Activated CD4-positive, alpha-beta T cell treated with anti-CD3 and anti-CD28 coated beads, Interleukin-2, amount 10 ng/mL, durations not matched to agents 24 days and 14 days (primary cell): ENCODE measurements at regions of chr12 and their contacts with region 1.

Region 1: DNA sequence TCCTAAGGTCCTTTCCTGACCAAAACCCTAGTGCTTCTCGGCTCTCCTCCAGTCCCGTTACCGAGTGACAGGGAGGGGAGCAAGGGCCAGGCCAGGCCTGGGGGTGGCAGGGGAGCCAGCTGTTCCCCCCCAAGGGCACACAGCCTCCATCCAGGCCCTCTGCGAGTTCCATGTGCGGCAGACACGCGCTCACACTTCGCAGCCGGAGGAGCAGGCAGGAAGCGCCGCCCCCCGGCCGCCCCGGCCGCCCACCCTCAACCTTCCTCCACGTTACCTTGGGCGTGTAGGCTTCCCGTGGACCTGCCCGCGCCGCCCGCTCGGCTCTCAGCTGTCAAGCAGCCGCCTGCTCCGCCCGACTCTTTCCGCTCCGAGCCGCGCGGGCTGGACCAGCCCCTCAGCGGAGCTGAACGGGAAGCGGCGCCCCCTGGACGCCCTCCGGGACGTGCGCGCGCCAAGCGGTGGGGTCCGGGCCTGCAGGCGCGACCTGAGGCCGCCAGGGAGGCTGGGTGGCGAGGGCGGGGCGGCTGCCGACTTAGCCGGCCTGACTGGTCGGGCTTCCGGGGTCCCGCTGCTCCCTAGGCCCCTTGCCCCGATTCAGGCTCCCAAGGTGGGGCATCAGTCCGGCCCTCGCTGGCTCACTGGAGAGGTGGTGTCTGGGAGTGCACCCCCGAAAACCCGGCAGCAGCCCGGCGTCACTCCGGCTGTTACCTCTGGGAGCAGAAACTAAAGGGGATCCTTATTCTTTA is at the start of gene CRACR2A:
- DNase-seq: peak; percentile 96
- H3K4me3 Mint-ChIP-seq: peak within 1 kb of the TSS; percentile 90
- H3K27ac Mint-ChIP-seq: peak within 1 kb of the TSS; percentile 98
- H3K4me1 Mint-ChIP-seq: peaks cover 47% of the 10 kb centered on the region
- H3K27me3 Mint-ChIP-seq: no peaks in the 10 kb centered on the region
- total RNA-seq, gene CRACR2A: 26.6 and 27.0 TPM in 2 replicates

Region 2: DNA sequence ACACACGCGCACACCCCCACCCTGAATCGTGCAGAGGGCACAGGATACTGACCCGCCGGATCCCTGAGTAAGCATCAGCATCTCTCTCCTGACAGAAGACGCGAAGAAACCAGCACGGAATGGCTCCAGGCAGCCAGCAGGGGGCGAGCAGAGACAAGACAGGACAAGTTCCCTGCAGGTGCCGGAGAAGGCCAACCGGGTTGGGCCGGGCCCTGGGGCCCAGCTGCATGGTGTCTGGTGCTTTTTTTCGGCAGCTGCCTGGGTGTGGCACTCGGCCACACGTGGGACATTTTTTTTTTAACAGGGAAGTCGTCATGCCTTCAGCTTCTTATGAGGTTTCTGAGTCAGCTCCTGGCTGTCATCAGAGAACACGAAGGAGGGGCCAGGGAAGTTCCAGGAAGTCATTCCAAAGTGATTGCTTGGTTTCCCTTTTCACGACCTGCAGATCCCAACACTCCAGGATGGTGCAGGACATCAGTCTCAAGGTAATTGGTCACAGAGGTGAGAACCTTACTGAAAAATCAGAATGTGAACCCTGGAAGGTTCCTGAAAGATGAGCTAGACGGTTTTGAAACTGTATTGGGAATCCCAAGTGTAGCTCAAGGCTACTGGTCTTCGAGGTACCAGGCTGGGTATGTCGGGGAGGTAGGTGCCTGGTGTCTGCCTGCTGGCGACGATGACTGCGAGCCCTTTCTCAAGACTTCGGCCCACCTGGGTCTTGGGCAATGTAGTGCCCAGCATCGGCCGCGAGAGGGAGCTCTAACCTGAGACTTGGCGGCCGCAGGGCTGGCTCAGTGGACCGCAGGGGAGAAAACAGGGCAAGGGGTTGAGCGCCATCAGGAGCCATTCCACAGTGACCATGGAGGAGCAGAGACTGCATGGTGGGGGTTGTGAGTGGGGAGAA is 452.7 kb before region 1 on chr12:
- intact Hi-C with region 1: loop called (anchors 1 kb)
- DNase-seq: peak; percentile 94
- H3K4me3 Mint-ChIP-seq: peak overlapping the region; percentile 64
- H3K27ac Mint-ChIP-seq: peak overlapping the region; percentile 78
- H3K4me1 Mint-ChIP-seq: peaks cover 11% of the 10 kb centered on the region
- H3K27me3 Mint-ChIP-seq: peaks cover 3% of the 10 kb centered on the region

Region 3: GRCh38 chr12:3489057-3489456 is 263.9 kb before region 1 on chr12:
- intact Hi-C with region 1: no loop called
- DNase-seq: no peak
- H3K4me3 Mint-ChIP-seq: no peak overlapping the region
- H3K27ac Mint-ChIP-seq: no peak overlapping the region
- H3K4me1 Mint-ChIP-seq: no peaks in the 10 kb centered on the region
- H3K27me3 Mint-ChIP-seq: peaks cover 54% of the 10 kb centered on the region

Region 4: DNA sequence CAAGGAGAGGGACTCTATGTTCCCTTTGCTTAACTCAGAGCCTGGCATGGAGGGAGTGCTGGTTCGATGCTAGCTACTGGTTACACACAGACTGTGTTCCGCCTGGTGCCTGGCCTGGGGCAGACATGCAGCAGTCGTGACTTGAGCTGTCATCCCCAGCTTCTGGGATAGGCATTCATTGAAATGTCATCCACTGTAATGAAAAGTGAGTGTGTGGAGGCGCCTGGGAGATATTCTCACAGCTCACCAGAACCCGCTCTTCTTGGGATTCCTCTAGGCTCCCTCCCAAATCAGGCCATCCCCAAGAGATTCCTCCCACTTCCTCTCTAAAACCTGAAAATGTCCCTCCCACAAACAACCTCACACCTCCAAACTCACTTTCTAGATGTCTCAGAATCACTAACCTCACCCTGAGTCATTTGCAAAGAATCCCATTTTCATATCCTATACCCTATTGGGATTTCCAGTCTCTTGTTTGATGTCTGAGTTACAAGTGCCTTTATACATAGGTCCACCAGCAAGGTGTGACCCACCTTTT is 82.8 kb before region 1 on chr12:
- intact Hi-C with region 1: loop called (anchors 5 kb)
- DNase-seq: no peak
- H3K4me3 Mint-ChIP-seq: no peak overlapping the region
- H3K27ac Mint-ChIP-seq: no peak overlapping the region
- H3K4me1 Mint-ChIP-seq: peaks cover 15% of the 10 kb centered on the region
- H3K27me3 Mint-ChIP-seq: no peaks in the 10 kb centered on the region

Region 5: DNA sequence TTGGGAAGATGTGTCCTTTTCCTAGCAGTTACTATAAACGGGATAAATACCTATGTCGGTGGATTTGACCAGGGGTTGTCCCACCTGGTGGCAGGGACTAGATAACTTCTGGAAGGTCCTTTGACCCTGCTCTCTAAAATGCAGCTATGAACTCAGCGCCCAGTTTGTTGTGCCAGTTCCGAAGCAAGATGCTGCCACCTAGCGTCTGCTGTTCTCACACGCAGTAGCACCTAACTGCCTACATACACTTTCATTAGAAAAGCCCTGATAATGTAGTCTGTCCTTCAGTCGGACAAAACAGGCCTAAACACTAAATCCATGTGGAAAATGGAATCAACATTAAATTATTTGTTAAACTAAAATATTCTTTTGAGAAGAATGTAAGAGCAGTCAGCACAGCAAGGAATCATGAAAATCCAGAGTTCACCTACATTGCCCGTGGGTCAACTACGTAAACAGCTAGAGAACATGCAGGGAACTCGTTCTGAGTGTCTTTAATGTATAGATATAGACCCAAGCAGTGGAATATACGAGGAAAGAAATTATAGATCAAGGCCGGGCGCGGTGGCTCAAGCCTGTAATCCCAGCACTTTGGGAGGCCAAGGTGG is 51.1 kb after region 1 on chr12:
- intact Hi-C with region 1: loop called (anchors 5 kb)
- DNase-seq: peak; percentile 90
- H3K4me3 Mint-ChIP-seq: no peak overlapping the region
- H3K27ac Mint-ChIP-seq: no peak overlapping the region
- H3K4me1 Mint-ChIP-seq: peaks cover 9% of the 10 kb centered on the region
- H3K27me3 Mint-ChIP-seq: no peaks in the 10 kb centered on the region

Region 6: DNA sequence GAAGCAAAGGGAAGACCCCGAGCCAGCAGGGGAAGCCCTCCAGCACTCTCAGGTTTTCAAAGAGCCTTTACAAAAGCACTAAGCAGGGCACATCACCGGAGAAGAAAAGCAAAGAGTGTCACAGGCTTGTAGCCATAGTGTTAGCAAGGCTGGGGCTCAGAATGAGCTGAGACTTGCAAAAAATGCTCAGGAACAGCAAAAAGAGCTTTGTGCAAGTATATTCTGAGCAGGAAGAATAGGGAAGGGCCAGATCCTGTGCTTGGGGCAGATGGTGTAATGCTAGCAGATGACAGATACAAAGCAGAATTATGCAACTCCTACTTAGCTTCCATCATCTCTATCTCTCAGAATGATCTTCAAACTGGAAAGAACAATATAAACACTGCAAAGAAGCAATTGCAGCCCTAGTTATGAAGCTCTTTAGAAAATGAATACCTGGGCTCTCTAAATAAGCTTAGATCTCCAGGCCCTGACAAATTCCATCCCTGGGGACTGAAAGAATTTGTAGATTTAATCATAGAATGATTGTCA is 144.0 kb after region 1 on chr12:
- intact Hi-C with region 1: no loop called
- DNase-seq: peak; percentile 64
- H3K4me3 Mint-ChIP-seq: peak overlapping the region; percentile 68
- H3K27ac Mint-ChIP-seq: peak overlapping the region; percentile 90
- H3K4me1 Mint-ChIP-seq: peaks cover 24% of the 10 kb centered on the region
- H3K27me3 Mint-ChIP-seq: no peaks in the 10 kb centered on the region